Right ventricle myocardium inferior (tissue), 1 donor: ENCODE measurements at regions of chrX and their contacts with region 1.

Region 1: GRCh38 chrX:136028251-136028984 is 43.2 kb downstream of the SLC9A6 start:
- DNase-seq: no peak
- ATAC-seq: peak; percentile 49

Region 2: DNA sequence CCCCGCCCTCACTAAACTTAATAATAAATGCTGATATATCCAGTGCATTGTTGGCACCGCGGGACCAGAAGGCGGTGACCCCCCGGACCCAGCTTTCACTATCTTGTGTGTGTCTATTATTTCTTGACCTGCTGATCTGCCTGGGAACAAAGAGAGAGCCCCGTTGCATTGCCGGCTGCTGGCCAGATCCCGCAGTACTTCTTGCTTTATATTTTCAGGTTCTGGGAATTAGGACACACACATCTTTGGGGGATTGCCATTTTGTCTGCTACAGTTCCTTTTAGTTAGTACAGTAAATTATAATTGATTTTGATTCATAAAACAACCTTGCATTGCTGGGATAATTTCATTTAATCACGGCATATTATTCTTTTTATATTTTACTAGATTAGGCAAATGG is 1003.9 kb before region 1 on chrX:
- intact Hi-C with region 1: no loop called
- DNase-seq: no peak
- ATAC-seq: no peak

Region 3: DNA sequence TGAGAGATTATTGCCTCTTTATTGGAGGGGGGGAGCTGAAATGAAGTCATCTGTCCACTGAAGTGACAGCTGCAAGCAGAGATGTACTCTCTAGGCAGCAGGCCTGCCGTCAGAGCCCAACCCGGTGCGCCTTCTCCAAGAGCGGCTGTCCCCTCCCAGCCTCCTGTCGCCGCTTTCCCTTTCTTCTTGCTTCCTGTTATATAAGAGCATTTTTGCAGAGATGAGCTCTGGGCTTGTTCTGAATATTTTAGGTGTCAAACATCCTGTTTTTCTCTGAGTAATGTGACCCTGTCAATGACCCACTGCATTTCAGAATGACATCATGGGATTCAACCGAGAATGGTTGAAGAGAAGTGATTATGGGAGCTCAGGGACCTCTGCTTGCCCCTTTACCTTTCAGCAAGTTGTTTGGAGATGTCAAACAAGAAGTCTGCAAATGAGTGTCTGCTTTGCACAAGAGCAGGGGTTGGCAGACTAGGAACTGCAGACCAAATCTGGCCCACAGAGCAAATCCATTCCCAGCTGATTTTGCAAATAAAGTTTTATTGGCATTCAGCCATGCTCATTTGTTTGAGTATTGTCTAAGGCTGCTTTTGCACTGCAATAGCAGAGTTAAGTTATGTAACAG is 36.7 kb after region 1 on chrX:
- intact Hi-C with region 1: no loop called
- DNase-seq: peak; percentile 72
- ATAC-seq: peak; percentile 82

Region 4: DNA sequence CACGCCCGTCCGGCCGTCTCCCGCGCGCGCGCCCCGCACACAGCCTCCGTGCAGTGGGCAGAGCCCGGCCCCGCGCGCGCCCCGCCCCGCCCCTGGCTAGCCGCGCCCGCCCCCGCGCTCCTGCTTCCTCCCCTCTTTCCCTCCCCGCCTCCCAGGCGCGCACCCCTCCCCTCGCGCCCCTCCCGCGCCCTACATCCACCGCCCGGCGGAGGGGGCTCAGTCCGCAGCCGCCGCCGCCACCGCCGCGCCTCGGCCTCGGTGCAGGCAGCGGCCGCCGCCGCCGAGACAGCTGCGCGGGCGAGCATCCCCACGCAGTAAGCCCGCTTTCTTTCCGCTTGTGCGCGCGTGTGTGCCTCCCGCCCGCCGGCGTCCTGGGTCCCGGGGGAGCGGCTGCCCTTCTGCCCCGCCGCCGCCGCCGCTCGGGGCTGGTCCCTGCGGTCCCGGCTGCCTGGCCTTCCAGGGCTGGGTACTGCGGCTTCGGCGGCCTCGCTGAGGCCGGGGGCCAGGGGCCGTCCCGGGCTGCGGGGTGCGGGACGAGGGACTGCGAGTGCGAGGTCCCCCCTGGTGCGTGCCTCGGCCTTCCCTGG is 119.0 kb after region 1 on chrX and contains the start of gene FHL1:
- intact Hi-C with region 1: loop called (anchors 5 kb)
- DNase-seq: peak; percentile 79
- ATAC-seq: peak; percentile 93
- total RNA-seq, gene FHL1: 1,876 TPM

Region 5: GRCh38 chrX:136162831-136163570 is 134.6 kb after region 1 on chrX:
- intact Hi-C with region 1: loop called (anchors 2 kb)
- DNase-seq: no peak
- ATAC-seq: peak; percentile 71

Region 6: GRCh38 chrX:136192839-136193414 is 164.5 kb after region 1 on chrX:
- intact Hi-C with region 1: no loop called
- DNase-seq: no peak
- ATAC-seq: peak; percentile 82

Region 7: GRCh38 chrX:136209016-136209738 is 180.8 kb after region 1 on chrX:
- intact Hi-C with region 1: loop called (anchors 5 kb)
- DNase-seq: peak; percentile 73
- ATAC-seq: peak; percentile 54

Region 8: DNA sequence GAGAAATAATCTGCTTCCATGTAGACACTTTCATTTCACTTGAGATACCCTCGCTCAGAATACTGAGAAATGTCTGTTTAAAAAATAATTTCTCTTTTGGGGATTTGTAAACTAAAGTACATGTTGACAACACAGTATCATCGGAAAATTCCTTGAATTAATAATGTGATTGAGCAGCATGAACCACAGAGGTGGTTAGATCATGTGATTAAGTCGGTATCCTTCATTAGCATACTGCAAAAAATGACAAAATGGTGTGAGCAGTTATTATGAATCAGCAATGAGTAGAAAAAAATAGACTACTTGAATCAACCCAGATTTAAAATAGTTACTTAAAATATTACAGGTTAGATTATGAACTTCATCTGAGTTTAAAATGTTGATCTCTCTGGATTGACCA is 208.7 kb after region 1 on chrX:
- intact Hi-C with region 1: no loop called
- DNase-seq: no peak
- ATAC-seq: no peak

Region 9: GRCh38 chrX:136268051-136269048 is 239.9 kb after region 1 on chrX:
- intact Hi-C with region 1: loop called (anchors 2 kb)
- DNase-seq: no peak
- ATAC-seq: no peak